Tibial artery (tissue), 4 donors: ENCODE measurements at regions of chr1 and their contacts with region 1.

Region 1: DNA sequence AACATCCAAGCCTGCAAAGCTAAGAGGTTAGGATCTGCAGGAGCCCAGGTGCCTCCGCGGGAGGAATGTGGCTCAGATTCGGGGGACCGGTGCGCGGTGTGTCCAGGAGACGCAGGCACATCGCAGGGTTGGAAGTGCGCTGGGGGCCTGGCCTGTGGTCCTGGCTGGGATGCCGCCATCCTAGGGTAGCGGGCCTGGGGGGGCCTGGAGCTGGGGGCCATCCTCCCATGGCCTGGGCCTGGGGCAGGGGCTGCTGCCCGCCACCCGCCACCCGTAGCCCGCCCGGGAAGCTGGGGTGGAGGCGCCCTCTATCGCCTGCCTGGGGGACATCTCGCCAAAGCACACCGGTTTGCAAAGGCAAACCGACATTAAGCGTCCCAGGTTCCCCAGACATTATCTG is 170.6 kb upstream of the ARHGEF16 start:
- DNase-seq: no peak
- H3K4me3 ChIP-seq: peak overlapping the region in 1 of 2 donors; percentile 0
- H3K27ac ChIP-seq: peak overlapping the region in 1 of 2 donors; percentile 41
- H3K4me1 ChIP-seq: peaks cover 0 to 61% (median 35%) of the 10 kb centered on the region in 4 donors
- H3K27me3 ChIP-seq: no peaks in the 10 kb centered on the region
- CTCF ChIP-seq: peak; percentile 82 to 85

Region 2: DNA sequence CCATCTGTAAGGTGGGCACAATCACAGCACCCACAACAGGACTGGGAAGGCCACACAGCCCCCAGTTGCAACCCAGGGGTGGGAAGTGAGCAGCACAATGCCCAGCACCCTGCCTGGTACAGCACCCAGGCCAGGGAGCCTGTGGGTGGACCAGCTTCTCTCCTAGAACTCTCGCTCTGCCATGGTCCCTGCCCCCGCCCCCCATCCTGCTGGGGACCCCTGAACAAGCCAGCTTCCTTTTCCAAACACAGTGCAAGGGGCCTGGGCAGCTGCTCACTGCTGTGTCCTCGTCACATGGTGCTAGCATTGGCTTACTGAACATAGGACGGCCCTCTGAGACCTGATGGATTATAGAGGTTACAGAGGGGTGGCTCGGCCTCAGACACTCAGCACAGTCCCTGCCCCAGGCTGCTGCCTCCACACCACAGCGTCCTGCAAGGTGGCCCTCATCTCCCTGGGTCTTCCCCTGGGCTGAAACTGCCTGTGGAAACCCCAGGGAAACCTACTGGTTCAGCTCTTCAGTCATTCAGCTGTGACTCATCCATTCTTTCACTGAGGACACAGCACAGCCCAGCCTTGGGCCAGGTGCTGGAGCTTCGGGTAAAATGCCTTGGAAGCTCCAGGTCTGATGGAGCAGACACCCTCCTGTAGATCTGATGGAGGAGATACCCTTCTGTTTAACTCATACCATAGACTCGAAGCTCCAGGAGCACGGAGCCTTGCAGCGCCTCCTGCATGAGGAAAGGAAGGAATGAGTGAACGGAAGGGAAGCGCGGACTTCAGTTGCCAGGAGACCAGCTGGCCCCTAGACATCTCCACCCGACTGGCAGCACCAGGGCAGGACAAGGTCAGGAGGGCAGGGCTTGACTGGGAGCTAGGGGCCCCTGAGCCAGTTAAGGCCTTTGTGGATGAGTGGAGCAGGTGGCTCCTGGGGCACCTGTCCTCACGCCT is 223.0 kb before region 1 on chr1:
- intact Hi-C with region 1: loop called (anchors 5 kb)
- DNase-seq: no peak
- H3K4me3 ChIP-seq: no peak overlapping the region
- H3K27ac ChIP-seq: no peak overlapping the region
- H3K4me1 ChIP-seq: peaks cover 0 to 35% (median 23%) of the 10 kb centered on the region in 4 donors
- H3K27me3 ChIP-seq: no peaks in the 10 kb centered on the region
- CTCF ChIP-seq: no peak

Region 3: DNA sequence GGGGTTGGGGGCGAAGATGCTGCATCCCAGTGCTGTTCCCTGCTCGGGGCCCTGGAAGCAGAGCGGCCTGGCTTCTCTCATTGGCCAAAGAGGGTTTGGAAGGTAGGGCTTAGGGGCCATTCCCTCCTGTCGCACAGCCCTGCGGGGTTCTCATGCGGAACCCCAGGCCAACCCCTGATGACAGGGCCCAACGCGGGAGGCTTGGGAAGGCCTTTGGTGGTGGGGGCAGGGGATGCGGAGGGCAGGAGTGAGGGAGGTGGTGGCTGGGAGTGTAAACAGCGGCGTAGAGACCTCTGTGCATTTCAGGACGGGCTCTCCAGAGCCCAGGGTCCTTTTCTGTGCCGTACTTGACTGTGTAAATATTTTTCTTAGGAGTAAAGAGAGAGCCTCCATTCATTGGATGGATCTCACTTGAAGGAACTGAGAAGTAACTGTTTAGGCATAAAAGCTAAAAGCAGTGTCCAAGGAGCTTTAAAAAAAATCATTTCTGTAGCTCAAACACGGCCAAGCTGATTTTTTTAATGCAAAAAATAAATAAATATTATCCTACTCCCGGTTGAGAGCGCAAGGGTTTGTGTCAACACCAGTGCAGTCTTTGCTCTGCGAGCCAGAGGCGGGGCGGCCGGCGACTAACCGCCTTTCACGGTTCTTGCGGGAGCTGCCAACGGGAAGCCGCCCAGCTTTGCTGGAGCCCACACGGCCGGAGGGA is 45.7 kb before region 1 on chr1:
- intact Hi-C with region 1: no loop called
- DNase-seq: peak; percentile 42 to 90
- H3K4me3 ChIP-seq: peak overlapping the region in 1 of 2 donors; percentile 21
- H3K27ac ChIP-seq: peak overlapping the region; percentile 73 to 84
- H3K4me1 ChIP-seq: peaks cover 0 to 61% (median 28%) of the 10 kb centered on the region in 4 donors
- H3K27me3 ChIP-seq: no peaks in the 10 kb centered on the region
- CTCF ChIP-seq: no peak